Mammary epithelial cell (primary cell): ENCODE measurements at regions of chr19 and their contacts with region 1.

Region 1: GRCh38 chr19:47436712-47437401 is 17.5 kb upstream of the MEIS3 start:
- DNase-seq: peak; percentile 55
- H3K4me3 ChIP-seq: no peak overlapping the region
- H3K27ac ChIP-seq: no peak overlapping the region
- H3K4me1 ChIP-seq: no peaks in the 10 kb centered on the region
- H3K27me3 ChIP-seq: no peaks in the 10 kb centered on the region
- CTCF ChIP-seq: peak; percentile 70 to 93

Region 2: DNA sequence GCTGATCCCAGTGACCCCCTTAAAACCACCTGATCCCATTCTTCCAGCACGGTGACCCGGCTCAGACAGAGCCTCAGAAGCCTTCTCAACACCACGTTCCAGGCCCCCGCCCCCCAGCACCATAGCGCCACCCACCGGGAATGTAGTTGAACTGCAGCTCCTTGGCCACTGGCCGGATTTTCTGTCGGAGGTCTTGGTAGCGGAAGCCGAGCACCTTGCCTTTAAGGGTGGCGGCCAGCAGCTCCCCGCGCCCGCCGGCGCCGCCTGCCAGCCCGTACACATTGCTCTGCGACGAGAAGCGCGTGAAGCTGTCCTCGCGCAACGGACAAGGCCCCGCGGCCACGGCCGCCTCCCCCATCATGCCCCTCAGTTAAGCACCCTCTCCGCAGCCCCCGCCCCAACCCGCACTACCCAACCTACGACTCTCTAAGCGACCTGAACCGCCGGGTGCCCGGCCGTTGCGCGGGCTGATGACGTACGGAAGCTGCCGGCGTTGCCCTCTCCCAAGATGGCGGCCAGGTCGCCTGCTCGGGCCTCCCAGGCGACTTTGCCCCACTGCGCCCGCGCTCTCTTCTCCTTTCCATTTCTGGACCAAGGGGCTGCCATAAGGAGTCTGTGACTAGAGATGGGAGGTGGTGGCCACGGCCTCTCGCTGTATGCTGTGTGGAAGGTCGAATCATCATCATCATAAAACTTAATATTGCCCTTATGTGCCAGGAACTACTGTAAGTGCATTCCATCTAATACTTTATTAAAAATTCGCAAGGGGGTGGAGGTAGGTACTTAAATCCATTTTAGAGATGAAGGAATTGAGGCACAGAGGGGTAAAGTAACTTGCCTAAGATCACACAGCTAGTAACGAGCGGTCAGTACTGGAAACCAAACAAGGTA is 47.2 kb after region 1 on chr19 and contains the start of gene KPTN:
- CTCF ChIA-PET with region 1: interaction called, 3 read pairs
- dilution Hi-C with region 1: no loop called
- in situ Hi-C with region 1: no loop called
- intact Hi-C with region 1: loop called (anchors 1 kb)
- DNase-seq: peak; percentile 82
- H3K4me3 ChIP-seq: peak within 1 kb of the TSS; percentile 73 to 96 (median 92)
- H3K27ac ChIP-seq: peak within 1 kb of the TSS; percentile 66
- H3K4me1 ChIP-seq: peaks cover 3% of the 10 kb centered on the region
- H3K27me3 ChIP-seq: no peaks in the 10 kb centered on the region
- CTCF ChIP-seq: peak; percentile 95 to 99
- total RNA-seq, gene KPTN: 1.5 to 10.8 TPM

Region 3: GRCh38 chr19:47494729-47495128 is 57.9 kb after region 1 on chr19:
- CTCF ChIA-PET with region 1: no interaction called
- dilution Hi-C with region 1: no loop called
- in situ Hi-C with region 1: no loop called
- intact Hi-C with region 1: no loop called
- DNase-seq: no peak
- H3K4me3 ChIP-seq: no peak overlapping the region
- H3K27ac ChIP-seq: no peak overlapping the region
- H3K4me1 ChIP-seq: no peaks in the 10 kb centered on the region
- H3K27me3 ChIP-seq: no peaks in the 10 kb centered on the region
- CTCF ChIP-seq: no peak

Region 4: GRCh38 chr19:47514869-47515588 is 78.2 kb after region 1 on chr19 and contains the start of gene NAPA:
- CTCF ChIA-PET with region 1: interaction called, 4 read pairs
- dilution Hi-C with region 1: no loop called
- in situ Hi-C with region 1: no loop called
- intact Hi-C with region 1: loop called (anchors 1 kb)
- DNase-seq: peak; percentile 100
- H3K4me3 ChIP-seq: peak within 1 kb of the TSS; percentile 84 to 99 (median 91)
- H3K27ac ChIP-seq: peak within 1 kb of the TSS; percentile 85
- H3K4me1 ChIP-seq: peaks cover 26% of the 10 kb centered on the region
- H3K27me3 ChIP-seq: no peaks in the 10 kb centered on the region
- CTCF ChIP-seq: no peak
- total RNA-seq, gene NAPA: 46.0 to 70.7 TPM

Region 5: GRCh38 chr19:47600246-47601179 is 163.7 kb after region 1 on chr19:
- CTCF ChIA-PET with region 1: interaction called, 3 read pairs
- dilution Hi-C with region 1: no loop called
- in situ Hi-C with region 1: loop called in 1 of 2 experiments (anchors 10 kb)
- intact Hi-C with region 1: loop called (anchors 5 kb)
- DNase-seq: peak; percentile 99
- H3K4me3 ChIP-seq: peak overlapping the region; percentile 57 to 90 (median 62)
- H3K27ac ChIP-seq: peak overlapping the region; percentile 70
- H3K4me1 ChIP-seq: peaks cover 17% of the 10 kb centered on the region
- H3K27me3 ChIP-seq: no peaks in the 10 kb centered on the region
- CTCF ChIP-seq: peak in 1 of 2 donors; percentile 2

Region 6: GRCh38 chr19:47707135-47707925 is 270.5 kb after region 1 on chr19:
- CTCF ChIA-PET with region 1: interaction called, 23 read pairs
- dilution Hi-C with region 1: no loop called
- in situ Hi-C with region 1: loop called in 1 of 2 experiments (anchors 5 kb)
- intact Hi-C with region 1: loop called (anchors 1 kb)
- DNase-seq: peak; percentile 68
- H3K4me3 ChIP-seq: no peak overlapping the region
- H3K27ac ChIP-seq: no peak overlapping the region
- H3K4me1 ChIP-seq: no peaks in the 10 kb centered on the region
- H3K27me3 ChIP-seq: no peaks in the 10 kb centered on the region
- CTCF ChIP-seq: peak; percentile 94 to 95